OCI-LY7 (cell line): ENCODE measurements at regions of chr15 and their contacts with region 1.

Region 1: DNA sequence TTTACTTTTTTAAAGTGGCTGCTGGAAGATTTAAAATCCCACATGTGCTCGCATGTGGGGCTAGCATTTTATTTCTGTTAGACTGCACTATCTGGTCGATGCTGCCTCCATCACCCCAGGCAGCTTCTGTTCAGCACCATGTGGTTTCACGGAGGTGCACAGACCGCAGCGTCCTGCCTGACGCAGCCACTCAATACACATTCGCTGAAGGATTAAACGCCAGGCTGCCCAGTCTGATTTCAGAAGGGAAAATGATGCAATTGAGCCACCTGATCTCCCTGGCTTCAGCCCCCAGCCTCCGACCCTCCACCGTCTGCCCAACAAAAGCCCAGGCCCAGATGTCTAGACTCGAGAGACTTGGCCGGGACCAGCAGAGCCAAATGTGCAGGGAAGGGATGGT is 84.5 kb downstream of the MEGF11 start:
- DNase-seq: peak; percentile 92
- H3K4me3 ChIP-seq: peak overlapping the region; percentile 13
- H3K27ac ChIP-seq: peak overlapping the region; percentile 92
- H3K4me1 ChIP-seq: peaks cover 85% of the 10 kb centered on the region
- CTCF ChIP-seq: no peak

Region 2: GRCh38 chr15:65993236-65993635 is 175.8 kb before region 1 on chr15:
- CTCF ChIA-PET with region 1: no interaction called
- POLR2A ChIA-PET with region 1: no interaction called
- intact Hi-C with region 1: no loop called
- DNase-seq: no peak
- H3K4me3 ChIP-seq: no peak overlapping the region
- H3K27ac ChIP-seq: no peak overlapping the region
- H3K4me1 ChIP-seq: no peaks in the 10 kb centered on the region
- CTCF ChIP-seq: no peak

Region 3: GRCh38 chr15:66184936-66185790 is 16.1 kb after region 1 on chr15:
- CTCF ChIA-PET with region 1: interaction called, 4 read pairs
- POLR2A ChIA-PET with region 1: interaction called, 50 read pairs
- intact Hi-C with region 1: no loop called
- DNase-seq: no peak
- H3K4me3 ChIP-seq: no peak overlapping the region
- H3K27ac ChIP-seq: no peak overlapping the region
- H3K4me1 ChIP-seq: peaks cover 77% of the 10 kb centered on the region
- CTCF ChIP-seq: no peak